KBM-7 (cell line): ENCODE measurements at regions of chr6 and their contacts with region 1.

Region 1: GRCh38 chr6:165884813-165885765 is 222.0 kb upstream of the PDE10A start:
- DNase-seq: peak; percentile 89

Region 2: DNA sequence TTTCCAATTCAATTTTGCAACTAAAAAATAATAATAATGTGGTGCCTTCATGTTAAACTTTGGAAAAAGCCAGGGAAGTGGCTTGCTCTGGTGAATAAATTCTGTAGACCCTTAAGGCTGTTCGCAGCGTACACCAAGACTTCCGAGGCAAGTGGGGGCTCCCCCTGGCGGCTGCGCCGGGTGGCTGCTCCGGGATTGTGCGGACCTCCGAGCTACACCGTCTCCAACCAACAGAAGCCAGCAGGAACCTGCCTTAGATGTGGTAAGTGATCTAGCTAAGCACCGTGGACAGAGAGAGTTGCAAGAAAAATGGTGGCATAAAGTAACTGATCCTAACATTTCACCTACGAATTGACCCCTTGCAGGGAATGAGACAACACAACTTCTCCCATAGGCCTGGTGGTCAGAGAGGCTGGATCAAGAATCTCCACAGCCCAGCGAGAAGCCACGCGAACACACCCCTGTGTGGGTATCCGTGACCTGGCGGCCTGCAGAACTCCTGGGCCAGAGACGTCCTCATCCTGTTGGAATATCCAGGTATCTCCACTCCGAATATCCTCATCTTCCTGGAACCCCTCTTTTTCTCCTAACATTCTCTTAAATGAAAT is 212.9 kb after region 1 on chr6:
- in situ Hi-C with region 1: loop called (anchors 10 kb)
- DNase-seq: peak; percentile 70